Activated T-helper 2 cell treated with anti-CD3 and anti-CD28 coated beads, Interferon-gamma antibody, Interleukin-2, Interleukin-4, amounts not matched to agents 10 μg/mL and 5 μg/mL and 100 μg/mL, durations not matched to agents 14 hours and 24 hours and 36 hours (primary cell): ENCODE measurements at regions of chr4 and their contacts with region 1.

Region 1: GRCh38 chr4:20684852-20685763 is 15.2 kb upstream of the PACRGL start:
- DNase-seq: no peak
- H3K4me3 Mint-ChIP-seq: no peak overlapping the region
- H3K27ac Mint-ChIP-seq: no peak overlapping the region
- H3K4me1 Mint-ChIP-seq: no peaks in the 10 kb centered on the region
- H3K27me3 Mint-ChIP-seq: peaks cover 6% of the 10 kb centered on the region

Region 2: GRCh38 chr4:18689308-18690115 is 1995.6 kb before region 1 on chr4:
- intact Hi-C with region 1: loop called (anchors 5 kb)
- DNase-seq: no peak
- H3K4me3 Mint-ChIP-seq: no peak overlapping the region
- H3K27ac Mint-ChIP-seq: no peak overlapping the region
- H3K4me1 Mint-ChIP-seq: no peaks in the 10 kb centered on the region
- H3K27me3 Mint-ChIP-seq: peaks cover 5% of the 10 kb centered on the region

Region 3: GRCh38 chr4:20395160-20395773 is 289.8 kb before region 1 on chr4:
- intact Hi-C with region 1: loop called (anchors 1 kb)
- DNase-seq: no peak
- H3K4me3 Mint-ChIP-seq: no peak overlapping the region
- H3K27ac Mint-ChIP-seq: no peak overlapping the region
- H3K4me1 Mint-ChIP-seq: no peaks in the 10 kb centered on the region
- H3K27me3 Mint-ChIP-seq: no peaks in the 10 kb centered on the region

Region 4: DNA sequence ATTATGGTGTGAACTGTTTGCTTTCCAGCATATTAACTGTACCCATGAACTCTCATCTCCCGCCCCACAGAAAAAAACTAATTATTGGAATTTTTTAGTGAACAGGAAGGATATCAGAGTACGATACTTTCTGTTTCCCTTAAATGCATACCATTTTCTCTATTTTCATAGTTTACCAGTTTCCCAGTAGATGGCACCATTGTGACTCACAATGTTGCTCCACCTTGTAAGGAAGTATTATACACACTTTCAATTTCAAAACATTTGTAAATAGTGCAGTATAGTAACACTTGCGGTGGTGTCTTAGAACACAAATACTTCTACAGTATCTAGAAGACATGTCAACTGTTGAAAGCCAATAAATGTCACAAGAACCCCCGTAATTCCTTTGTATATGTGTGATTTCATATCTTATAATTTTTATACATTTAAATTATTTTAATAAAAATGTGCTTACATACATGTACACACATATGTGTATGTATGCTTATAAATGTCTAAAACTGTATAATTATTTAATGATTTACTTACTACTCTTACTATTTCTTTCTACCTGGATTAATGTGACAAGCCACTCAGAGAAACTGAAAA is 266.2 kb before region 1 on chr4:
- intact Hi-C with region 1: loop called (anchors 1 kb)
- DNase-seq: no peak
- H3K4me3 Mint-ChIP-seq: peak overlapping the region; percentile 61
- H3K27ac Mint-ChIP-seq: peak overlapping the region; percentile 7
- H3K4me1 Mint-ChIP-seq: peaks cover 10% of the 10 kb centered on the region
- H3K27me3 Mint-ChIP-seq: peaks cover 1% of the 10 kb centered on the region

Region 5: GRCh38 chr4:20778896-20779295 is 93.8 kb after region 1 on chr4:
- intact Hi-C with region 1: no loop called
- DNase-seq: no peak
- H3K4me3 Mint-ChIP-seq: no peak overlapping the region
- H3K27ac Mint-ChIP-seq: no peak overlapping the region
- H3K4me1 Mint-ChIP-seq: no peaks in the 10 kb centered on the region
- H3K27me3 Mint-ChIP-seq: no peaks in the 10 kb centered on the region